Aorta (tissue), 5 donors: ENCODE measurements at regions of chr10 and their contacts with region 1.

Region 1: DNA sequence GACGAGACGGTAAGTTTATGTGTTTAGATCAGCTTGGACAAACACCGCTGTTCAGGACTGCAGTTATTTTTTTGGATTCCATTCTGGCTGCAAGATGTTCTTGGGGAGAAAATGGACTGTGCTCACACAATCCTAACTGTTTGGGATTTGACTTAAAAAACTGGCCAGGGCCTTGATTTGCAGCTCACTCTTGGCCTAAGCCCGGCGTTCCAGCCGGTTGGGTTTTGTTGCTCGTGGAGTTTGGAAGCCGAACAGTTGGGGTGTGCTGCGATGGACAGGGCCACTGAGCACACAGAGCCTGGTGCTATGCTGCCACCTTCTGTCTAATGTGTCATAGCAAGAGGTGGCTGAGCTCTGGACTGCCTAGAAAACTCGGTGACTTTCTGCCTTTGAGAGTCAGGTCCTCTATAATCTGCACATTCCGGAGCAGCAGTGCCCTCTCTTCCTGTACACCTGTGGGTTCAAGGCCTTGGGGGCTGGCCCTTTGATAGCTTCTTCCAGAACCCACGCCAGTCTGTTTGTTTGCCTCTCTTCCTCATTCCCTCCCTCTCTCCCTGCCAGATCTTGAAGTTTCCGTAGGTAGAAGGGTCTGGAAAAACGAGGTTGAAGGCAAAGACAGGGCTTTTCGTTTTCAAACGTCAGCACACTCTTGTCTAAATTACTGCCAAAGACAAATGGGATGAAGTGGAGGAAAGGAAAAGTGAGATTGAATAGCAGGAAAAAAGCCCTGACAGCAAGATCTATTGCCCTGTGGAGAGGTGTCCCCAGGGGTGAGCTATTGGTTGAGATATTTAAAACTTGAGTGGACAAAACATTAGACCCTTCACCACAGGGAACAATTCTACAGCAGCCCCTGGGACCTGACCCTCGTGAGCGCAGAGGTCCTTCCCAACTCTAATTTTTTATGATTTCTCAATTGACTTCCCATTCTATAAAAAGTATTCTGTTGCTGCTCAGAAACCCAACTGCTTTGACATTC is 167.5 kb upstream of the HABP2 start:
- DNase-seq: peak; percentile 90 to 91
- ATAC-seq: peak; percentile 97
- H3K4me3 ChIP-seq: no peak overlapping the region
- H3K27ac ChIP-seq: peak overlapping the region in 1 of 2 donors; percentile 90
- H3K4me1 ChIP-seq: peaks cover 0 to 4% of the 10 kb centered on the region in 2 donors
- H3K27me3 ChIP-seq: no peaks in the 10 kb centered on the region

Region 2: DNA sequence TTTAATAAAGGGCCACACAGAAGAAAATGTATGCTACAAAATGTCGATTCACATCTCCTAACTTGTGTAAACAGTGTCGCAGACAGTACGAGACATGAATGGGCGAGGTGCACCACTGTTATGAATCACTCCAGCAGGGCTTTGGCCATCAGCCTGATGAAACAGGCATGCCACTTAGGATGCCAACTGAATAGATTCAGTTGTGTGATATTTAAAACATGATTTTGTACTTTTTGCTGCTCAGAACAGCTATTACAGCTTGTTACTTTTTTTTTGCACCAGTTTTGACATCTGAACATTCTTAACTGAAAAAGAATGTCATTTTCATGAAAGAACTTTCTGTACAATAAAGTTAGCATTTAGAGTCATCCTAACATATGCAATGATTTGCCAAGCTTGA is 800.2 kb before region 1 on chr10:
- intact Hi-C with region 1: loop called in 1 of 2 experiments (anchors 10 kb)
- DNase-seq: peak in 1 of 2 donors; percentile 70
- ATAC-seq: peak; percentile 70
- H3K4me3 ChIP-seq: no peak overlapping the region
- H3K27ac ChIP-seq: no peak overlapping the region
- H3K4me1 ChIP-seq: peaks cover 2 to 6% of the 10 kb centered on the region in 2 donors
- H3K27me3 ChIP-seq: no peaks in the 10 kb centered on the region

Region 3: DNA sequence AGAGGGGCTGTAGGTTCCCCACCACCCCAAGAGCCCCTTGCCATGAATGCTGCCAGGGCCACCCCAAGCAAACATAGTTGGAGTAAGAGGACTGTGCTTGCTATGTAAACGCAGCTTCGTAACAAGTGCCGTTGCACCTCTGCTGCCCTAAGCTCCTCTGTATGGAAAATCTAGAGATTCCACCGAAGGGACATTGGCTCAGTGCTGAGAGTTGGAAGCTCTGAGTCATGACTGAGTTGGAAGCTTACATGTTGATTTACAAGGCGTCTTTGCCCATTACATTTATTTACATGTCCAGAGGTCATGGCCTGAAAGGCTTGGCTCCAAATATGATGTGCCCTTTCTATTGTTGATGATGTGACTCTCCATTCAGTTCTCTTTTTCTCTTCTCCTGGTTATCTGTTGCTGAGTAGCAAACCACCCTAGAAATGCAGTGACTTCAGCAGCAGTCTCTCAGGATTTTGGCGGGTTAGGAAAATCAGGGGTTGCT is 668.3 kb before region 1 on chr10:
- intact Hi-C with region 1: loop called in 1 of 2 experiments (anchors 5 kb)
- DNase-seq: peak in 1 of 2 donors; percentile 51
- ATAC-seq: peak; percentile 75
- H3K4me3 ChIP-seq: no peak overlapping the region
- H3K27ac ChIP-seq: peak overlapping the region in 1 of 2 donors; percentile 32
- H3K4me1 ChIP-seq: no peaks in the 10 kb centered on the region
- H3K27me3 ChIP-seq: no peaks in the 10 kb centered on the region

Region 4: GRCh38 chr10:113139699-113140098 is 245.6 kb before region 1 on chr10:
- intact Hi-C with region 1: loop called (anchors 5 to 10 kb)
- DNase-seq: no peak
- ATAC-seq: no peak
- H3K4me3 ChIP-seq: no peak overlapping the region
- H3K27ac ChIP-seq: no peak overlapping the region
- H3K4me1 ChIP-seq: no peaks in the 10 kb centered on the region
- H3K27me3 ChIP-seq: no peaks in the 10 kb centered on the region

Region 5: DNA sequence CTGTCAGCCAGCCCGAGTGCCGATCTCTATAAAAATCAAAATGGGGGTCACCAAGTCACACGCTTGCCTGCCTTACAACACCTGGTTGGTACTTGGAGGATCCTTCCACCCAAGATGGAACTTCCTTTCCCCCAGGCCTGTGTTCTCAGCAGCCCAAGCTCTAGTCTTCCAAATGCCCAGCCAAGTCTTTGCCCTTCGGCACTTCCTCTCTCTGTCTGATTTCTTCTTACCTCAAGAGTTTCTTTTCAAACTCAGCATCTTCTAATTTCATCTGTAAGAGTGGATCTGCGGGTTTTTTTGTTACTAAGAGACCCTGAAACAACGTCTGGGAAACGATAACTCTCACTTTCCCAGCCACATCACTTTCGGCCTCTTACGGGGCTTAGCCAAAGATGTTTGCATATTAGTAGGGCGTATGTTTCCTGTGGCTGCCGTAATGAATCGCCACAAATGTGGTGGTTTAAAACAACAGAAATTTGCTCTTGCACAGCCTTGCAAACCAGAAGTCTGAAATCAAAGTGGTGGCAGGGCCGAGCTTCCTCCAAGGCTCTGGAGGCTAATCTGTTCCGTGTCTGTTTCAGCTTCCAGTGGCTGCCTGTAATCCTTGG is 215.4 kb before region 1 on chr10:
- intact Hi-C with region 1: loop called in 1 of 2 experiments (anchors 10 kb)
- DNase-seq: no peak
- ATAC-seq: no peak
- H3K4me3 ChIP-seq: no peak overlapping the region
- H3K27ac ChIP-seq: no peak overlapping the region
- H3K4me1 ChIP-seq: no peaks in the 10 kb centered on the region
- H3K27me3 ChIP-seq: no peaks in the 10 kb centered on the region

Region 6: GRCh38 chr10:113521123-113521795 is 135.9 kb after region 1 on chr10:
- intact Hi-C with region 1: loop called (anchors 5 to 10 kb)
- DNase-seq: peak in 1 of 2 donors; percentile 81
- ATAC-seq: peak; percentile 82
- H3K4me3 ChIP-seq: no peak overlapping the region
- H3K27ac ChIP-seq: no peak overlapping the region
- H3K4me1 ChIP-seq: peaks cover 5 to 8% of the 10 kb centered on the region in 2 donors
- H3K27me3 ChIP-seq: no peaks in the 10 kb centered on the region